Spleen (tissue), 13 donors: ENCODE measurements at regions of chr1 and their contacts with region 1.

Region 1: GRCh38 chr1:236281654-236282424 is at the start of gene ERO1B:
- DNase-seq: peak; percentile 100
- H3K4me3 ChIP-seq: peak within 1 kb of the TSS; percentile 68 to 97 (median 92)
- H3K27ac ChIP-seq: peak within 1 kb of the TSS; percentile 84 to 93 (median 90)
- H3K4me1 ChIP-seq: peaks cover 12 to 51% (median 36%) of the 10 kb centered on the region in 6 donors
- H3K27me3 ChIP-seq: no peaks in the 10 kb centered on the region
- CTCF ChIP-seq: peak in 2 of 11 experiments; percentile 32 to 44
- POLR2A ChIP-seq: peak; percentile 81 to 95 (median 89)
- total RNA-seq, gene ERO1B: 15.7 to 29.4 (median 18.6) TPM

Region 2: DNA sequence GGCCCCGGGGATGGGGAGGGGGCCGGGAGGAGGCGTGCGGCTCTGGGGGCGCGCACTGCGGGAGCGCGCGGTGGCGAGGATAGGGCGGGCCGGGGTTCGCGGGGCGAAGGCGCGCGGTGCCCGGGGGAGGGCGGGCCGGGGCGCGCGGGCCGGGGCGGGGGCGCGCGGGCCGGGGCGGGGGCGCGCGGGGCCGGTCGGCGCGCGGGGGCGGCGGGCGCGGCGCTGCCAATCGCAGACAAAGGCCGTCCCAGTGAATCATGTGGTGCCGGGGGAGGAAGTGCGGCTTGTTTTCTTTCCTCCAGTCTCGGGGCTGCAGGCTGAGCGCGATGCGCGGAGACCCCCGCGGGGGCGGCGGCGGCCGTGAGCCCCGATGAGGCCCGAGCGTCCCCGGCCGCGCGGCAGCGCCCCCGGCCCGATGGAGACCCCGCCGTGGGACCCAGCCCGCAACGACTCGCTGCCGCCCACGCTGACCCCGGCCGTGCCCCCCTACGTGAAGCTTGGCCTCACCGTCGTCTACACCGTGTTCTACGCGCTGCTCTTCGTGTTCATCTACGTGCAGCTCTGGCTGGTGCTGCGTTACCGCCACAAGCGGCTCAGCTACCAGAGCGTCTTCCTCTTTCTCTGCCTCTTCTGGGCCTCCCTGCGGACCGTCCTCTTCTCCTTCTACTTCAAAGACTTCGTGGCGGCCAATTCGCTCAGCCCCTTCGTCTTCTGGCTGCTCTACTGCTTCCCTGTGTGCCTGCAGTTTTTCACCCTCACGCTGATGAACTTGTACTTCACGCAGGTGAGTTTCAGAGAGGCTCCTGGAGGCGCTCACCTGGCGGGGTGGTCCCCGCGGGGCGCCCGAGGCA is 139.4 kb before region 1 on chr1 and contains the start of gene GPR137B:
- intact Hi-C with region 1: loop called (anchors 10 kb)
- DNase-seq: peak; percentile 87
- H3K4me3 ChIP-seq: peak within 1 kb of the TSS; percentile 48 to 94 (median 76)
- H3K27ac ChIP-seq: peak within 1 kb of the TSS in 7 of 8 donors; percentile 46 to 83 (median 78)
- H3K4me1 ChIP-seq: peaks cover 8 to 60% (median 35%) of the 10 kb centered on the region in 6 donors
- H3K27me3 ChIP-seq: peaks cover 0 to 47% (median 14%) of the 10 kb centered on the region in 7 donors
- CTCF ChIP-seq: no peak
- POLR2A ChIP-seq: no peak
- total RNA-seq, gene GPR137B: 27.9 to 54.8 (median 41.0) TPM

Region 3: DNA sequence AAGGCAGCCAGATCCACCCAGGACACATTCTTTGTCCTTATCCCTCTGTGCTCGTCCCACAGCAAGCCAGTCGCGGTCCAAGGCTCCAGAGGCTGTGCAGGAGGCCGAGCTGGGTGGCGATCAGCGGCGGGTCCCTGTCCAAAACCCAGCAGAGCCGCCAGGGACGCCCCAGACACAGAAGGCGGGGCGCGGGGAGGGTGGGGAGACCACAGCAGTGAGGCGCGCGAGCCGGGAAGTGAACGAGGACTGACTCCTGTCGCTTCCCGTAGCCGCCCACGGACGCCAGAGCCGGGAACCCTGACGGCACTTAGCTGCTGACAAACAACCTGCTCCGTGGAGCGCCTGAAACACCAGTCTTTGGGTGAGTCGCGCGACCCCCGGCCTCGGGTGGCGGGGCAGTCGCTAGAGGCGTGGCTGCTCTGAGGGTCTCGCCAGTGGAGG is 241.9 kb after region 1 on chr1 and contains the start of gene LGALS8:
- intact Hi-C with region 1: loop called (anchors 5 kb)
- DNase-seq: peak; percentile 98
- H3K4me3 ChIP-seq: peak within 1 kb of the TSS; percentile 88 to 98 (median 94)
- H3K27ac ChIP-seq: peak within 1 kb of the TSS; percentile 86 to 99 (median 97)
- H3K4me1 ChIP-seq: peaks cover 0 to 34% (median 17%) of the 10 kb centered on the region in 6 donors
- H3K27me3 ChIP-seq: no peaks in the 10 kb centered on the region
- CTCF ChIP-seq: peak in 1 of 11 experiments; percentile 11
- POLR2A ChIP-seq: peak in 1 of 3 donors; percentile 58
- total RNA-seq, gene LGALS8: 128 to 276 (median 155) TPM